K562 (cell line): ENCODE measurements at regions of chr1 and their contacts with region 1.

Region 1: DNA sequence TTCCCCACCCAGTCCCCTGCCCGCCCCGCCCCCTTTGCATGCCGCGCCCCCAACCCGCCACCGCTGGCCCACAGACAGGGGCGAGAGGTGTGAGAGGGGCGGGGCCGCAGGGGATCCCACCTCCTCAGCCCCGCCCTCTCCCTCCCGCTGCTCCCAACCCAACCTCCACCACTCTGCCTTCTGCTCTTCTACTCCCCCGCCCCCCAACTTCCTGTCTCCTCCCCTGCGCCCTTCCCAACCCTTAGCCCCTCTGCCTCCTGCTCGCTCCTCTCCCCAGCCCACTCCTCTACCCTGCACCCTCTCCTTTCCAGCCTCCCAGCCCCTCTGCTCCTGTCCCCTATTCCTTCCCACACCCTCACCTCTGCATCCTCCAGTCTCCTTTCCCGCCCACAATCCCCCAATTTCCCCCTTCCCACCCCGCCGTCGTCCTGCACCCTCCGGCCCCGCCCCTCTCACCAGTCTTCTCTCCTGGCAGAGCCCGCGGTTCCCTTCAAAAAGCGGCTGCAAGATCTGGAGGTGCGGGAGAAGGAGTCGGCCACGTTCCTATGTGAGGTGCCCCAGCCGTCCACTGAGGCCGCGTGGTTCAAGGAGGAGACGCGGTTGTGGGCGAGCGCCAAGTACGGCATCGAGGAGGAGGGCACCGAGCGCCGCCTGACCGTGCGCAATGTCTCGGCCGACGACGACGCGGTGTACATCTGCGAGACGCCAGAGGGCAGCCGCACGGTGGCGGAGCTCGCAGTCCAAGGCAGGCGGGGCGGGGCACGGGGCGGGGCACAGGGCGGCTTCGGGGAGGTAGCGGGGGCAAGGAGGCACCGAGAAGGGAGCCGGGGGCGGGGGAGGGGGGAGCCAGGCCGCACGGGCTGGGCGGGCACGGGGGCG is 5.4 kb downstream of the OBSCN start:
- DNase-seq: peak; percentile 92 to 98 (median 95)
- ATAC-seq: peak; percentile 98
- H3K4me3 ChIP-seq: peak overlapping the region; percentile 55
- H3K27ac ChIP-seq: peak overlapping the region; percentile 79; the same call in 2 of the 3 replicates
- H3K4me1 ChIP-seq: peaks cover 0 to 58% of the 10 kb centered on the region in 2 experiments; a peak in 3 of 5 replicates
- H3K27me3 ChIP-seq: peaks cover 0 to 3% of the 10 kb centered on the region in 2 experiments; a peak in 2 of 5 replicates
- CTCF ChIP-seq: peak; percentile 63 to 95 (median 85); a peak in 5 of 6 replicates
- EP300 ChIP-seq: no peak
- POLR2A ChIP-seq: peak; percentile 34; the same call in 1 of the 2 replicates
- RAD21 ChIP-seq: peak; percentile 63 to 66

Region 2: DNA sequence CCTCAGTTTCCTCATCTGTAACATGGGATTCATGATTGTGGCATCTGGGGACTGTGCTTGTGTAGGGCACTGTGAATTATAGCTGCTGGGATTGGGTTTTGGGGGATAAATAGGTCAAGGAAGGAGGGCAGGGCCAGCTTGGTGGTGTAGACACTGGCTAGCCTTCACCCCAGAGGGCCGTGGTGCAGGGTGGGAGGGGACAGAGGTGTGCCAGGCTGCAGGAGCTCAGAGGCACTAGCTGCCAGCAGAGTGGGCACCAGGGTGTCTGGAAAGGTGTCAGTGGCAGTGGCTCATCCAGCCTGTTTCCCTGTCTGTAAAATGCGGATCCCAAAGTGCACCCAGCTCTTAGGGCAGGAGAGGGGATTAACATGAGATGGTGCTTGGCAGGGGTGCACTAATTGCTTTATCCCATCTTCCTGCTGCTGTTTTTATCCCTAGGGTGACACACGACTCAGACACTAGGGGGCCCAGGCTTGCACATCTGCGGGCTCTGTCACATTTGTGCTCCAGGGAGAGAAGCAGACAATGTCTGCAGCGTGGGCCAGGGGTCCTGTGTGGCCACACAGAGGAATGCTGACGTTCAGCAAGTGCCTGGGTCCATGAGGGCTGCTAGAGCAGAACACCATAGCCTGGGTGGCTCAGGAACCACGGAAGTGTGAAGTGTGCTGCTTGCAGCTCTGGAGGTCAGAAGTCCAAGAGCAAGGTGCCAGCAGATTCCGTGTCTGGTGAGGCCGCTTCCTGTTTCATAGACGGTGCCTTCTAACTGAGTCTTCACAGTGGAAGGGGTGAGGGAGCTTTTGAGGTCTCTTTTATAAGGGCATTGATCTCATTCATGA is 14.0 kb after region 1 on chr1:
- CTCF ChIA-PET with region 1: no interaction called
- POLR2A ChIA-PET with region 1: interaction called, 13 read pairs
- in situ Hi-C with region 1: no loop called
- intact Hi-C with region 1: no loop called
- DNase-seq: peak in 2 of 4 experiments; percentile 56 to 58
- ATAC-seq: peak; percentile 84
- H3K4me3 ChIP-seq: no peak overlapping the region
- H3K27ac ChIP-seq: no peak overlapping the region
- H3K4me1 ChIP-seq: peaks cover 4 to 5% of the 10 kb centered on the region in 2 experiments; a peak in 3 of 5 replicates
- H3K27me3 ChIP-seq: no peaks in the 10 kb centered on the region; a peak in 1 of 5 replicates
- CTCF ChIP-seq: peak; percentile 56 to 62 (median 58); a peak in 5 of 6 replicates
- EP300 ChIP-seq: no peak
- POLR2A ChIP-seq: no peak
- RAD21 ChIP-seq: peak in 1 of 2 experiments; percentile 36; a peak in 1 of 4 replicates

Region 3: GRCh38 chr1:228249513-228250305 is 36.5 kb after region 1 on chr1:
- CTCF ChIA-PET with region 1: no interaction called
- POLR2A ChIA-PET with region 1: no interaction called
- in situ Hi-C with region 1: no loop called
- intact Hi-C with region 1: no loop called
- DNase-seq: no peak
- ATAC-seq: no peak
- H3K4me3 ChIP-seq: no peak overlapping the region
- H3K27ac ChIP-seq: no peak overlapping the region
- H3K4me1 ChIP-seq: no peaks in the 10 kb centered on the region; a peak in 2 of 5 replicates
- H3K27me3 ChIP-seq: no peaks in the 10 kb centered on the region
- CTCF ChIP-seq: no peak
- EP300 ChIP-seq: no peak
- POLR2A ChIP-seq: no peak
- RAD21 ChIP-seq: no peak

Region 4: GRCh38 chr1:228555074-228555989 is 342.1 kb after region 1 on chr1:
- CTCF ChIA-PET with region 1: no interaction called
- POLR2A ChIA-PET with region 1: no interaction called
- in situ Hi-C with region 1: no loop called
- intact Hi-C with region 1: no loop called
- DNase-seq: peak in 2 of 4 experiments; percentile 21 to 31
- ATAC-seq: peak; percentile 39; the same call in 1 of the 3 replicates
- H3K4me3 ChIP-seq: no peak overlapping the region
- H3K27ac ChIP-seq: no peak overlapping the region
- H3K4me1 ChIP-seq: peaks cover 0 to 24% of the 10 kb centered on the region in 2 experiments; a peak in 2 of 5 replicates
- H3K27me3 ChIP-seq: no peaks in the 10 kb centered on the region
- CTCF ChIP-seq: no peak
- EP300 ChIP-seq: no peak
- POLR2A ChIP-seq: no peak
- RAD21 ChIP-seq: no peak